ENCODE measurements at regions of chr3 and their contacts with region 1.

Region 1: GRCh38 chr3:183907911-183908331 is 23.2 kb upstream of the PARL start:
- DNase-seq: no peak
- ATAC-seq: no peak
- H3K4me3 ChIP-seq: no peak overlapping the region
- H3K27ac ChIP-seq: no peak overlapping the region
- H3K4me1 ChIP-seq: no peaks in the 10 kb centered on the region
- H3K27me3 ChIP-seq: peaks cover 24% of the 10 kb centered on the region
- CTCF ChIP-seq: no peak
- POLR2A ChIP-seq: no peak
- RAD21 ChIP-seq: no peak

Region 2: GRCh38 chr3:183966251-183966801 is 58.4 kb after region 1 on chr3:
- CTCF ChIA-PET with region 1: no interaction called
- POLR2A ChIA-PET with region 1: no interaction called
- dilution Hi-C with region 1: no loop called
- in situ Hi-C with region 1: no loop called
- intact Hi-C with region 1: no loop called
- DNase-seq: no peak
- ATAC-seq: no peak
- H3K4me3 ChIP-seq: no peak overlapping the region
- H3K27ac ChIP-seq: no peak overlapping the region
- H3K4me1 ChIP-seq: peaks cover 3% of the 10 kb centered on the region; the same call in 1 of the 2 replicates
- H3K27me3 ChIP-seq: no peaks in the 10 kb centered on the region
- CTCF ChIP-seq: no peak
- POLR2A ChIP-seq: no peak
- RAD21 ChIP-seq: no peak

Region 3: DNA sequence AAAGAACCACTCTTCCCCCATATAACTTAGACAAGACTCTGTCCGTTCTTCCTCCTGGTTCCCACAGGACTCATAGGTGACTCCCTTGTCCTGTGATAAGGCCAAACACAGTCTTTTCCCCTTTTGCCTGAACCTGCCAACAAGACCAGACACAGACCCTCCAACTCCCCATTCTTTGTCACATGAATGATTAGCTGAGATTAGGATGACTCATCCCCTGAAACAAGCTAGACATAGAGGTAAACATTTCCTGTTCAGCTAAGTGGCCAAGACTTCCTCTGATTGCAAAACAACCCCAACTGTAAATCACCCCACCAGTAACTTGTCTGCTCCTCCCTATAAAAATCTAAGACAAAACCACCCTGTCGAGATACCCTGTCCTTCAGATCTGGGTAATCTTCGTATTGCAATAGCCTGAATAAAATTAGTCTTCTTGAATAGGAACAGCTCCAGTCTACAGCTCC is 177.5 kb after region 1 on chr3:
- CTCF ChIA-PET with region 1: no interaction called
- POLR2A ChIA-PET with region 1: interaction called, 19 read pairs
- dilution Hi-C with region 1: no loop called
- in situ Hi-C with region 1: no loop called
- intact Hi-C with region 1: no loop called
- DNase-seq: peak; percentile 36
- ATAC-seq: no peak
- H3K4me3 ChIP-seq: no peak overlapping the region
- H3K27ac ChIP-seq: no peak overlapping the region
- H3K4me1 ChIP-seq: no peaks in the 10 kb centered on the region
- H3K27me3 ChIP-seq: peaks cover 10% of the 10 kb centered on the region
- CTCF ChIP-seq: no peak
- POLR2A ChIP-seq: no peak
- RAD21 ChIP-seq: no peak

Measured in IMR-90 (cell line).